Left colon (tissue), 2 donors: ENCODE measurements at regions of chr11 and their contacts with region 1.

Region 1: GRCh38 chr11:60615497-60615896 is 83.9 kb upstream of the MS4A8 start:
- DNase-seq: no peak
- ATAC-seq: no peak

Region 2: GRCh38 chr11:60363542-60364510 is 251.7 kb before region 1 on chr11:
- intact Hi-C with region 1: loop called in 1 of 2 experiments (anchors 2 kb)
- DNase-seq: peak; percentile 40 to 66
- ATAC-seq: peak; percentile 87

Region 3: GRCh38 chr11:60469723-60470122 is 145.8 kb before region 1 on chr11:
- intact Hi-C with region 1: no loop called
- DNase-seq: no peak
- ATAC-seq: no peak